Naive thymus-derived CD4-positive, alpha-beta T cell (primary cell): ENCODE measurements at regions of chr20 and their contacts with region 1.

Region 1: GRCh38 chr20:62121776-62122631 is at the start of gene LSM14B:
- DNase-seq: peak; percentile 94 to 99 (median 96)
- ATAC-seq: peak; percentile 91
- H3K4me3 ChIP-seq: peak within 1 kb of the TSS; percentile 77
- H3K4me3 Mint-ChIP-seq: peak within 1 kb of the TSS; percentile 86 to 96 (median 92)
- H3K27ac ChIP-seq: peak within 1 kb of the TSS; percentile 81
- H3K27ac Mint-ChIP-seq: peak within 1 kb of the TSS; percentile 84 to 97 (median 95)
- H3K4me1 ChIP-seq: peaks cover 33 to 39% of the 10 kb centered on the region in 2 donors
- H3K4me1 Mint-ChIP-seq: peaks cover 42 to 71% (median 59%) of the 10 kb centered on the region in 7 donors
- H3K27me3 ChIP-seq: no peaks in the 10 kb centered on the region
- H3K27me3 Mint-ChIP-seq: no peaks in the 10 kb centered on the region
- total RNA-seq, gene LSM14B: 39.5 to 61.5 (median 41.9) TPM

Region 2: GRCh38 chr20:62010551-62011402 is 111.2 kb before region 1 on chr20:
- CTCF ChIA-PET with region 1: interaction called, 4 read pairs
- POLR2A ChIA-PET with region 1: interaction called, 8 read pairs
- intact Hi-C with region 1: loop called (anchors 1 to 5 kb)
- DNase-seq: peak; percentile 36 to 70 (median 66)
- ATAC-seq: peak; percentile 81
- H3K4me3 ChIP-seq: no peak overlapping the region
- H3K4me3 Mint-ChIP-seq: peak overlapping the region in 1 of 10 donors; percentile 6
- H3K27ac ChIP-seq: no peak overlapping the region
- H3K27ac Mint-ChIP-seq: peak overlapping the region in 6 of 9 donors; percentile 6 to 65 (median 43)
- H3K4me1 ChIP-seq: peaks cover 0 to 4% of the 10 kb centered on the region in 2 donors
- H3K4me1 Mint-ChIP-seq: peaks cover 6 to 24% (median 10%) of the 10 kb centered on the region in 7 donors
- H3K27me3 ChIP-seq: no peaks in the 10 kb centered on the region
- H3K27me3 Mint-ChIP-seq: no peaks in the 10 kb centered on the region

Region 3: DNA sequence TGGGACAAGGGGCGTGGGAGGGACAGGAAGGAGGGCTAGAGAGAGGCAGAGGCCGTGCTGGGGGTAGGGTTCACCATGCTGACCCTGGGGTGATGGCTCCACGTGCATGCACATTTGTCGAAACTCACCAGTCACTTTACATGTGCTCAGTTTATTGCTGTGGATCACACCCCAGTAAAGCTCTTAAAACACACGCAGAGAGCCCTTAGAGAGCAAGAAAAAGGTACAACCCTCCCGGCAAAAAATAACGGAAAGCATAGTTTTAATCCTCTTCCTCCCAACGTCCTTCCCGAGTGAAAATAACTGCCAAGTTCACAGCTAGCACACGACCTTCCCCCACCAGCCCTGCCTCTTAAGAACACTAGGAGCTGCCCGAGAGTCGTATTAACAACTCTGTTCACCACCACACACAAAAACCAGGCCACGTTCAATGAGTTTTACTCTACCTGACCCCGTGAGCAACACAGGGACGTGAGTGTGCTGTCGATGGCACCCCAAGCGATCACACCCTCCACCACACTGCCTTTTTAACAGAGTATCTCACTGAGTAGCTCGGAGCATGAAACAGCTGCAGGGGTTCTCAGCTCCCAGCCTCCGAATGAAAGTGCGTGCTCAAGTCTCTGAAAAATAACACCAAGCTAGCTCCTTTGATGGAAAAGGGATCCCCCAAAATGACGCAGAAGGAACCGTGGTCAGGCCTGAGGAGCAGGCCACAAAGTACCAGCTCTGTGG is 96.0 kb before region 1 on chr20:
- CTCF ChIA-PET with region 1: interaction called, 4 read pairs
- POLR2A ChIA-PET with region 1: interaction called, 10 read pairs
- intact Hi-C with region 1: loop called in 1 of 2 experiments (anchors 1 kb)
- DNase-seq: peak in 7 of 9 donors; percentile 39 to 58 (median 50)
- ATAC-seq: peak; percentile 75
- H3K4me3 ChIP-seq: no peak overlapping the region
- H3K4me3 Mint-ChIP-seq: peak overlapping the region in 6 of 10 donors; percentile 5 to 56 (median 26)
- H3K27ac ChIP-seq: no peak overlapping the region
- H3K27ac Mint-ChIP-seq: peak overlapping the region in 8 of 9 donors; percentile 2 to 79 (median 44)
- H3K4me1 ChIP-seq: peaks cover 5 to 21% of the 10 kb centered on the region in 2 donors
- H3K4me1 Mint-ChIP-seq: peaks cover 25 to 73% (median 55%) of the 10 kb centered on the region in 7 donors
- H3K27me3 ChIP-seq: no peaks in the 10 kb centered on the region
- H3K27me3 Mint-ChIP-seq: no peaks in the 10 kb centered on the region

Region 4: GRCh38 chr20:62136283-62137091 is 14.5 kb after region 1 on chr20:
- CTCF ChIA-PET with region 1: interaction called, 10 read pairs
- POLR2A ChIA-PET with region 1: interaction called, 58 read pairs
- intact Hi-C with region 1: loop called in 1 of 2 experiments (anchors 1 kb)
- DNase-seq: peak; percentile 54 to 81 (median 75)
- ATAC-seq: peak; percentile 81
- H3K4me3 ChIP-seq: no peak overlapping the region
- H3K4me3 Mint-ChIP-seq: peak overlapping the region in 1 of 10 donors; percentile 20
- H3K27ac ChIP-seq: peak overlapping the region; percentile 18
- H3K27ac Mint-ChIP-seq: peak overlapping the region; percentile 60 to 94 (median 87)
- H3K4me1 ChIP-seq: peaks cover 10 to 15% of the 10 kb centered on the region in 2 donors
- H3K4me1 Mint-ChIP-seq: peaks cover 33 to 55% (median 45%) of the 10 kb centered on the region in 7 donors
- H3K27me3 ChIP-seq: no peaks in the 10 kb centered on the region
- H3K27me3 Mint-ChIP-seq: no peaks in the 10 kb centered on the region

Region 5: GRCh38 chr20:62143118-62143973 is 21.3 kb after region 1 on chr20 and contains the starts of genes PSMA7 and SS18L1:
- CTCF ChIA-PET with region 1: interaction called, 6 read pairs
- POLR2A ChIA-PET with region 1: interaction called, 58 read pairs
- intact Hi-C with region 1: loop called (anchors 1 kb)
- DNase-seq: peak; percentile 79 to 90 (median 87)
- ATAC-seq: peak; percentile 91
- H3K4me3 ChIP-seq: peak within 1 kb of the TSS; percentile 65
- H3K4me3 Mint-ChIP-seq: peak within 1 kb of the TSS; percentile 89 to 98 (median 92)
- H3K27ac ChIP-seq: peak within 1 kb of the TSS; percentile 75
- H3K27ac Mint-ChIP-seq: peak within 1 kb of the TSS; percentile 80 to 97 (median 93)
- H3K4me1 ChIP-seq: peaks cover 28 to 36% of the 10 kb centered on the region in 2 donors
- H3K4me1 Mint-ChIP-seq: peaks cover 36 to 64% (median 55%) of the 10 kb centered on the region in 7 donors
- H3K27me3 ChIP-seq: no peaks in the 10 kb centered on the region
- H3K27me3 Mint-ChIP-seq: no peaks in the 10 kb centered on the region
- total RNA-seq, gene PSMA7: 125 to 301 (median 165) TPM
- total RNA-seq, gene SS18L1: 17.8 to 26.7 (median 22.6) TPM

Region 6: DNA sequence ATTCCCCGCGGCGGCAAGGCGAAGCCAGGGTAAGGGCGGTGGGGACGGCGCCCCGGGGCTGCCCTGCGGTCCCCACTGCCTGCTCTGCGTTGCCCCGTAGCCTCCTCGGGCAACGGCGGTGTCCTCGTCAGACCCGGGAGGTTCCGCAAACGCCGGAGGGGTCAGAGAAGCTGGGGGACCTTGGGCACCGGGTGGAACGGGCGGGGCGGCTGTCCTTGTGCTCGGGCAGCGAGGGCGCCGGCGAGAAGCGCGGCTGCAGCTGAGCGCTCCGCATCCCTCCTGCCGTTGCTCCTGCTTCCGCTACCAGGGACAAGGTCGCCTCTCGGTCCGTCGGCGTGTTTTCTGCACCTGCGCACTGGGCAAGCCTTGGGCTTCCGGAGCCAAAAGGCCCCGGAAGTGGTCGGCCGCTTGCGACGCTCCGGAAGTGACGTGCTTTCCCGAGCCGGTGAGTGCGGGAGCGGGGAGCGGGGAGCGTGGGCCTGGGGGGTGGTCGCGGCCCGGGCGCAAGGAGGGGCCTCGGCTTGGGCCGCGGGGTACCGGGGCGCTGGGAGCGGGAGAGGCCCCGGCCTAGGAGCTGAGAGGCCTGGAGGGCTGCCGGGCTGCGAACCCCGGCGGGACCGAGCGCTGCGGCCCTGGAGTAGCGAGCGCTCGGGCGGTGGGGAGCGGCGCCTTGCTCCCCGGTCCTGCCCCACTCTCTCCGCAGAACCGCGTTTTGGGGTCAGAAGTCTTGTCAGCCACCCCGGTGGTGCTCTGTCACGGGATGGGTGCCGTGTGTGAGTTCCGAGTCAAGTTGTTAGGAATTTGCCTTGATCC is 60.8 kb after region 1 on chr20 and contains the start of gene MTG2:
- CTCF ChIA-PET with region 1: no interaction called
- POLR2A ChIA-PET with region 1: interaction called, 3 read pairs
- intact Hi-C with region 1: loop called (anchors 1 kb)
- DNase-seq: peak; percentile 81 to 94 (median 93)
- ATAC-seq: peak; percentile 95
- H3K4me3 ChIP-seq: peak within 1 kb of the TSS; percentile 87
- H3K4me3 Mint-ChIP-seq: peak within 1 kb of the TSS; percentile 84 to 95 (median 90)
- H3K27ac ChIP-seq: peak within 1 kb of the TSS; percentile 92
- H3K27ac Mint-ChIP-seq: peak within 1 kb of the TSS; percentile 90 to 97 (median 95)
- H3K4me1 ChIP-seq: peaks cover 9 to 16% of the 10 kb centered on the region in 2 donors
- H3K4me1 Mint-ChIP-seq: peaks cover 15 to 55% (median 42%) of the 10 kb centered on the region in 7 donors
- H3K27me3 ChIP-seq: no peaks in the 10 kb centered on the region
- H3K27me3 Mint-ChIP-seq: no peaks in the 10 kb centered on the region
- total RNA-seq, gene MTG2: 20.4 to 51.5 (median 41.8) TPM

Region 7: GRCh38 chr20:62937366-62938104 is 815.5 kb after region 1 on chr20:
- CTCF ChIA-PET with region 1: no interaction called
- POLR2A ChIA-PET with region 1: no interaction called
- intact Hi-C with region 1: loop called in 1 of 2 experiments (anchors 5 kb)
- DNase-seq: peak; percentile 96 to 98 (median 97)
- ATAC-seq: peak; percentile 95
- H3K4me3 ChIP-seq: peak overlapping the region; percentile 94
- H3K4me3 Mint-ChIP-seq: peak overlapping the region in 6 of 10 donors; percentile 94 to 98 (median 96)
- H3K27ac ChIP-seq: peak overlapping the region; percentile 97
- H3K27ac Mint-ChIP-seq: peak overlapping the region; percentile 88 to 98 (median 95)
- H3K4me1 ChIP-seq: peaks cover 34 to 37% of the 10 kb centered on the region in 2 donors
- H3K4me1 Mint-ChIP-seq: peaks cover 26 to 51% (median 40%) of the 10 kb centered on the region in 7 donors
- H3K27me3 ChIP-seq: no peaks in the 10 kb centered on the region
- H3K27me3 Mint-ChIP-seq: no peaks in the 10 kb centered on the region